ENCODE measurements at regions of chr19 and their contacts with region 1.

Region 1: GRCh38 chr19:9796113-9796773 is 22.6 kb downstream of the FBXL12 start:
- DNase-seq: peak; percentile 84 to 93 (median 90)
- H3K4me3 ChIP-seq: no peak overlapping the region
- H3K4me3 Mint-ChIP-seq: peak overlapping the region in 2 of 8 donors; percentile 11 to 55
- H3K27ac ChIP-seq: peak overlapping the region; percentile 48
- H3K27ac Mint-ChIP-seq: peak overlapping the region; percentile 89 to 97 (median 94)
- H3K4me1 ChIP-seq: peaks cover 20% of the 10 kb centered on the region
- H3K4me1 Mint-ChIP-seq: peaks cover 19 to 35% (median 28%) of the 10 kb centered on the region in 4 donors
- H3K27me3 ChIP-seq: no peaks in the 10 kb centered on the region
- H3K27me3 Mint-ChIP-seq: no peaks in the 10 kb centered on the region

Region 2: DNA sequence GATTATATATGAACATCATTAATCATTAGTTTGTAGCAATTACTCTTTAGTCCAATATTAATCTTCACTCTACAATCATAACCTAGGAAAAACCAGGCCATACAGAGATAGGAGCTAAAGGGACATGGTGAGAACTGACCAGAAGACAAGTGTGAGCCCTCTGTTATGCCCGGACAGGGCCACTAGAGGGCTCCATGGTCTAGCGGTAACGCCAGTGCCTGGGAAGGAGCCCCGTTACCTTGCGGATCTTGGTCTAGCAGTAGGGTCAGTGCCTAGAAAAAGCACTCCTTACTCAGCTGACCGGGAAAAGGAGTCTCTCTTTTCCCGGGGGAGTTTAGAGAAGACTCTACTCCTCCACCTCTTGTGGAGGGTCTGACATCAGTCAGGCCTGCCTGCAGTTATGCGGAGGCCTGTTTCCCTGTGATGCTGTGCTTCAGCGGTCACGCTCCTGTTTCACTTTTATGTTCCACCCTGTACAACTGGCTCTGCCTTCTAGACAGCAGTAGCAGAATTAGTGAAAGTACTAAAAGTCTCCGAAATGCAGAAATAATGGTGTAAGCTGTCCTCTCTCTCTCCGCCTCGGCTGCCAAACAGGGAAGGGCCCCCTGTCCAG is 590.6 kb before region 1 on chr19:
- CTCF ChIA-PET with region 1: interaction called, 11 read pairs
- POLR2A ChIA-PET with region 1: no interaction called
- intact Hi-C with region 1: loop called (anchors 1 kb)
- DNase-seq: peak; percentile 43 to 59 (median 52)
- H3K4me3 ChIP-seq: no peak overlapping the region
- H3K4me3 Mint-ChIP-seq: peak overlapping the region in 7 of 8 donors; percentile 6 to 62 (median 57)
- H3K27ac ChIP-seq: no peak overlapping the region
- H3K27ac Mint-ChIP-seq: no peak overlapping the region
- H3K4me1 ChIP-seq: peaks cover 4% of the 10 kb centered on the region
- H3K4me1 Mint-ChIP-seq: peaks cover 0 to 9% (median 3%) of the 10 kb centered on the region in 4 donors
- H3K27me3 ChIP-seq: no peaks in the 10 kb centered on the region
- H3K27me3 Mint-ChIP-seq: peaks cover 0 to 13% of the 10 kb centered on the region in 2 donors

Region 3: GRCh38 chr19:9435279-9436268 is 360.7 kb before region 1 on chr19 and contains the start of gene ZNF266:
- CTCF ChIA-PET with region 1: interaction called, 3 read pairs
- POLR2A ChIA-PET with region 1: no interaction called
- intact Hi-C with region 1: loop called (anchors 1 kb)
- DNase-seq: peak; percentile 89 to 92 (median 91)
- H3K4me3 ChIP-seq: peak within 1 kb of the TSS; percentile 49 to 85
- H3K4me3 Mint-ChIP-seq: peak within 1 kb of the TSS; percentile 92 to 98 (median 96)
- H3K27ac ChIP-seq: peak within 1 kb of the TSS; percentile 87
- H3K27ac Mint-ChIP-seq: peak within 1 kb of the TSS; percentile 97 to 98 (median 98)
- H3K4me1 ChIP-seq: peaks cover 30% of the 10 kb centered on the region
- H3K4me1 Mint-ChIP-seq: peaks cover 20 to 49% (median 36%) of the 10 kb centered on the region in 4 donors
- H3K27me3 ChIP-seq: no peaks in the 10 kb centered on the region
- H3K27me3 Mint-ChIP-seq: no peaks in the 10 kb centered on the region
- total RNA-seq, gene ZNF266: 73.4 to 76.4 TPM

Region 4: GRCh38 chr19:9621156-9622037 is 174.8 kb before region 1 on chr19 and contains the start of gene ZNF561:
- CTCF ChIA-PET with region 1: interaction called, 37 read pairs
- POLR2A ChIA-PET with region 1: interaction called, 4 read pairs
- intact Hi-C with region 1: loop called (anchors 1 kb)
- DNase-seq: peak; percentile 89 to 92 (median 90)
- H3K4me3 ChIP-seq: peak within 1 kb of the TSS; percentile 87 to 94
- H3K4me3 Mint-ChIP-seq: peak within 1 kb of the TSS; percentile 96 to 100 (median 99)
- H3K27ac ChIP-seq: peak within 1 kb of the TSS; percentile 88
- H3K27ac Mint-ChIP-seq: peak within 1 kb of the TSS; percentile 100
- H3K4me1 ChIP-seq: peaks cover 21% of the 10 kb centered on the region
- H3K4me1 Mint-ChIP-seq: peaks cover 16 to 29% (median 22%) of the 10 kb centered on the region in 4 donors
- H3K27me3 ChIP-seq: no peaks in the 10 kb centered on the region
- H3K27me3 Mint-ChIP-seq: peaks cover 0 to 3% of the 10 kb centered on the region in 2 donors
- total RNA-seq, gene ZNF561: 67.2 to 75.8 TPM

Region 5: GRCh38 chr19:9735986-9736385 is 60.3 kb before region 1 on chr19:
- CTCF ChIA-PET with region 1: no interaction called
- POLR2A ChIA-PET with region 1: no interaction called
- intact Hi-C with region 1: no loop called
- DNase-seq: no peak
- H3K4me3 ChIP-seq: no peak overlapping the region
- H3K4me3 Mint-ChIP-seq: no peak overlapping the region
- H3K27ac ChIP-seq: no peak overlapping the region
- H3K27ac Mint-ChIP-seq: no peak overlapping the region
- H3K4me1 ChIP-seq: no peaks in the 10 kb centered on the region
- H3K4me1 Mint-ChIP-seq: no peaks in the 10 kb centered on the region
- H3K27me3 ChIP-seq: no peaks in the 10 kb centered on the region
- H3K27me3 Mint-ChIP-seq: peaks cover 1 to 2% of the 10 kb centered on the region in 2 donors

Region 6: DNA sequence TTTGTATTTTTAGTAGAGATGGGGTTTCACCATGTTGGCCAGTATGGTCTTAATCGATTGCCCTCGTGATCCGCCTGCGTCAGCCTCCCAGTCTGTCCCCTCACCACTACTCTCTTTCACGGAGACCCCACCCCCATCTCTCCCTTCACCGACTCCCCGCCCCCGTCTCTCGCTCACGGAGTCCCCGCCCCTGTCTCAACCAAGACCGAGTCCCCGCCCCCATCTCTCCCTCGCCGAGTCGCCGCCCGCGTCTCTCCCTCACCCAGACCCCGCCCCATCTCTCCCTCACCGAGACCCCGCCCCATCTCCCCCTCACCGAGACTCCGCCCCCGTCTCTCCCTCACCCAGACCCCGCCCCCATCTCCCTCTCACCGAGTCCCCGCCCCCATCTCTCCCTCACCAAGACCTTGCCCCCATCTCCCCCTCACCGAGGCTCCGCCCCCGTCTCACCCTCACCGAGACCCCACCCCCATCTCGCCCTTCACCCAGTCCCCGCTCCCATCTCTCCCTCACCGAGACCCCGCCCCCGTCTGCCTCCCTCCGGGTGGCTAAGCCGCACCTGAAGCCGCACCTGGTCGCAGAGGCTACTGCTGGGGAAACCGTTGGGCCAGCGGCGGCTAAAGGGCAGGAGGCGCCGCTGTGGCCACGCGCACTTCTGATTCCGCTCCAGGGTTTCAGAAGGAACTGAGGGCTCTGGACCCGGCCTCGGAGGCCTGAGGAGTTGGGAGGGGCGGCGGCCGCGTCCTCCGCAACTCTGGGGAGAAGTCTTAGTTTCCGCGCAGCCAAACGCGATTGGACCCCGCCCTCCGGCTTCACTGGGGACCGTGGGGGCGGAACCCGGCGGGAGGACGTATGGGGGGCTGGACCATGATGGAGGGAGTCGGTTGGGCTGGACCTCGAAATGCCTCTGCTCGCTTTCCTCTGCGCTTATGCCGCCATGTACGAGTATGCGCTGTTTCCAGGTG is 10.6 kb before region 1 on chr19:
- CTCF ChIA-PET with region 1: interaction called, 3 read pairs
- POLR2A ChIA-PET with region 1: no interaction called
- intact Hi-C with region 1: loop called (anchors 1 kb)
- DNase-seq: peak; percentile 89 to 96 (median 93)
- H3K4me3 ChIP-seq: peak overlapping the region in 1 of 2 donors; percentile 62
- H3K4me3 Mint-ChIP-seq: peak overlapping the region; percentile 82 to 93 (median 92)
- H3K27ac ChIP-seq: peak overlapping the region; percentile 77
- H3K27ac Mint-ChIP-seq: peak overlapping the region; percentile 85 to 99 (median 96)
- H3K4me1 ChIP-seq: peaks cover 12% of the 10 kb centered on the region
- H3K4me1 Mint-ChIP-seq: peaks cover 14 to 36% (median 27%) of the 10 kb centered on the region in 4 donors
- H3K27me3 ChIP-seq: no peaks in the 10 kb centered on the region
- H3K27me3 Mint-ChIP-seq: no peaks in the 10 kb centered on the region

Region 7: DNA sequence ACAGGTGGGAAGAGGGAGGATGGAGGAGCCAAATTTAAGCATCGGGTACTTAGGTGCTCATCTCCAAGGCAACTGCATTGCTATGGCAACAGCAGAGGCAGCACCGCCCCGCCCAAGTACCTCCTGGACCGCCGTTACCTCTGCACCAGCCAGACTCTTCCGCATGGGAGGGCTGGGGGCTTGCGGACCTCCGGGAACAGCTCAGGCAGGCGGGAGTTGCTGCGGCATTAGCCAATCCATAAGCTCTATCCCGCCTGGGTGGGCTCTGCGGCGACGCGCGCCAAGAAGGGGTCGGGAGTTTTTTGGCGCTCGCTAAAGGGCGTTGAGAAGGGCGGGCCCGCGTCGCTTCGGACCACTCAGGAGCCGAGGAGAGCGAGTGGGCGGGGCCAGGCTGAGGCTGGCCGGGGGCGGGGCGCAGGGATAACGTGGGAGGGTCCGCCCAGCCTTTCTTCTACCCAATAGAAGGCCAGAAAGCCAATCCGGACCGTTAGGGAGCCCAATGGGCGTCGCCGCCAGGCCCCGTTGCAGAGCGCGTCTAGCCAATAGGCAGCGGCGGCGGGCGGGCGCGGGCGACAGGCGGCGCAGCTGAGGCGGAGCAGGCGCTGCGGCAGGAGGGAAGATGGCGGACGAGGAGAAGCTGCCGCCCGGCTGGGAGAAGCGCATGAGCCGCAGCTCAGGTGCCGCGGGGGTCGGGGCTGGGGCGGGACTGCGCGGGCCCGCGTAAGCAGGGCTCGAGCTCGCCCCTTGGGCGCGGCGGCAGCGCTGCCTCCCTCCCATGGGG is 38.7 kb after region 1 on chr19 and contains the start of gene PIN1:
- CTCF ChIA-PET with region 1: no interaction called
- POLR2A ChIA-PET with region 1: no interaction called
- intact Hi-C with region 1: loop called (anchors 1 kb)
- DNase-seq: peak; percentile 99 to 100 (median 99)
- H3K4me3 ChIP-seq: peak within 1 kb of the TSS; percentile 55 to 97
- H3K4me3 Mint-ChIP-seq: peak within 1 kb of the TSS; percentile 93 to 97 (median 96)
- H3K27ac ChIP-seq: peak within 1 kb of the TSS; percentile 74
- H3K27ac Mint-ChIP-seq: peak within 1 kb of the TSS; percentile 91 to 99 (median 97)
- H3K4me1 ChIP-seq: peaks cover 14% of the 10 kb centered on the region
- H3K4me1 Mint-ChIP-seq: peaks cover 10 to 34% (median 19%) of the 10 kb centered on the region in 4 donors
- H3K27me3 ChIP-seq: no peaks in the 10 kb centered on the region
- H3K27me3 Mint-ChIP-seq: no peaks in the 10 kb centered on the region
- total RNA-seq, gene PIN1: 72.1 to 76.9 TPM

Measured in CD4-positive, alpha-beta memory T cell (primary cell).